ENCODE measurements at regions of chr1 and their contacts with region 1.

Region 1: DNA sequence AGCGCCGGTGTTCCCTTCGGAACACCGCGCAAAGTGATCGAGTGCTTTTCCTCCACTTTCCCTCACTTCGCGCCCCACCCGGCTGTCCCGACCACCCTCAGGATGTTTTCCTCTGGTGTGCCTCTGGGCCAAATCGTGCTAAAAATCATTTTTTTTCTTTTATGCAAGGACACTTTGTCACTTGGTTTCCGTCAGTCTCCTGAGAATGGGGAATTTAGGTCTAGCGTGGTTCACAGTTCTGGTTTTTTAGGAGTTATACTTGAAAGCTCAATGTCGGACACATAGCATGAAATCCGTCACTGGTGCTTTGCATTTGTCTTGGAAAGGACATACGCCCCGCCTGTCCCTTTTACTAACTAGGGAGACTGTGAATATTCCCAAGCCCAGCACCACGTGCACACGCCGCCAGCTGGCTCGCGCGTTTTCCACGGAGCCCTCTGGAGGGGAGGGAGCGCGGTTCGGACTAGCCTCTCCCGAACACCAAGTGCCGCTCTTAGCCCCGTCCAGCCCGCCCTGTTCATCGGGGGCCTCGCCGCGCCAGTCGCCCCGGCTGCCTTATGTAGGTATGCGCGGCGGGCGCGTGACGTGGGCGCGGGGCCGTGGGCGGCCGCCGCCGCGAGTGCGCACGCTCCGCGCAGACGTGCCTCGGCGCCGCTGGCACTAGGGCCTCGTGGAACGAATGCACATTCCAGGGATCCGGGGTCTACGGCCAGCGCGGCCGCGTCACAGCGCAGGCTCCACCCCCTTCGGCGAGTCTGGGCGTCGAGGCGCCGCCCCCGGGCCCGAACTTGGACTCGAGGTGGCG is 572 bp upstream of the IRF2BP2 start:
- DNase-seq: peak; percentile 97

Region 2: DNA sequence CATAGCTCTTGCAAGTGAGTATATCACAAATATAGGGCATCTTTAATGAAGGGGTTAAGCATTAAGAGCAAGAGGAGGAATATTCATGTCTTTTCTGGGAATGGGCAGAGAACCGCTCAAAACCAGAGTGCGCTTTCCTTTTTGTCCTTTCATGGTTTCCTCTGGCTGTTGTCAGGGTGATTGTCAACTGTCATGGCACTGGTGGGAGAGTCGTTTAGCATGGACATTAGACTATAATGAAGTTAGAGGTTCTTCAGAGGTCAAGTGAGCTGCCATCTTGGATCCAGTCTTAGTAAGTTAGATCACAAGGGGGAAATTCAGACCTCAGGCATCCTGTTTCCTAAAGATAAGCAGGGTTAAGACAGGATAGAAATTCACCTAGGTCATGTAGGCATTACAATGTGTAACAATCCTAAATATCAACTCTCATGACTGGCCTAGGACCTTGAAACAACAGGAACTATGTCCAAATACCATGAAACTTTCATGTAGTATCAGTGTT is 249.4 kb before region 1 on chr1:
- intact Hi-C with region 1: no loop called
- DNase-seq: no peak

Region 3: DNA sequence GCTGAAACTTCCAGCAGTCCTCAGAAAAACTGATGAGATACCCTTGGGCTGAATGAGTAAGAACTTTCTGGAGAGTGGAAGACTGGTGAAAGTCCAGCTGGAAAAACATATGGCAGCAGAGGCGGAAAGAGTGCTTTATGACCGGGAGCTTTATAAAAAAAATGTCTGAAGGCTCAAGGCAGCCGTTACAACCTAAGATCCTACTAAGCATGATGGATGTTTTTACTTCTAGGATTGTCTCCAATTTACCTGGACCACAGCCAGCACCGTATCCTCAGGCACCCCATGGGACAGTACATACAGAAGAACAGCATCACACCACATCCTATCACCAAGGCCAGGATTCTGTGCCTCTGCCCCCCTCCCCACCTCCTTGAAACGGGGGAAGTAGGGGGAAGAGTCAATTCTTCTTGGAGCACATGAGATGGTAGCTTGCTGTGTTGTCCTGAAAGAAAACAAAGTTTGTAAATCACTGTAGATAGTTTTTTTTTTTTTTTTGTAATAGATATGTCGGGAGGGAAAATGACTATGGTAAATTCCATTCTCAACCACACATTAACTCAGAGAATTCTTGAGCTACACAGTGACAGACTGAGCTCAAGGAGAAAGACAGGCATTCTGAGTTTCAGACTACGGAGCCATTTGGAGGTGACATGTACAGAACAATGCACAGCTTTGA is 11.2 kb after region 1 on chr1:
- intact Hi-C with region 1: no loop called
- DNase-seq: no peak

Region 4: DNA sequence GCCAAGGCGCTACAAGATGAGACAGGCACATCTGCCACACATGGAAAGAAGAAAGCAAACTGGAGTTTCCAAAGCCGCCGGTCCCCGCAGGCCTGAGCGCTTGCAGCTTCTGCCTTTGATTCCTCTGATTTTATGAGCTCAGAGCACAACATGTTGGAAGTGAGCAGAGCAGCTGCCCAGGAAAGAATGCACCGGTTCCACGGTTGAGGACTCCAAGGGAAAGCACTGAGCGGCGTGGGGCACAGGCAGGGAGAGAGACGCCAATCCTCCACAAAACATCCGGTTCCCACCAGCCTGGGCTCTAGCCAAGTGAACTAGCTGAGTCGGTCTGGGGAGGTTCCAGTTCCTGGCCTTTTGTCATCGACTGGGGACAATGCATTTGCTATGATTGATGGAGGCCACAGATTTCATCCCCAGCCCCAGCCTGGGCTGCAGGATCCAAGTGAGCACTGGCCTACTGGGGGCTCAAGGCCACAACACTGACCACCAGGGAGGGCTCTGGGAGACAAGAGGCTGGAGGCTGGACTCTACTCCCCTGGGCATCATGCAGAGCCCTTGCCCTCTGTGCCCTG is 252.5 kb after region 1 on chr1:
- intact Hi-C with region 1: loop called (anchors 5 kb)
- DNase-seq: peak; percentile 87

Region 5: DNA sequence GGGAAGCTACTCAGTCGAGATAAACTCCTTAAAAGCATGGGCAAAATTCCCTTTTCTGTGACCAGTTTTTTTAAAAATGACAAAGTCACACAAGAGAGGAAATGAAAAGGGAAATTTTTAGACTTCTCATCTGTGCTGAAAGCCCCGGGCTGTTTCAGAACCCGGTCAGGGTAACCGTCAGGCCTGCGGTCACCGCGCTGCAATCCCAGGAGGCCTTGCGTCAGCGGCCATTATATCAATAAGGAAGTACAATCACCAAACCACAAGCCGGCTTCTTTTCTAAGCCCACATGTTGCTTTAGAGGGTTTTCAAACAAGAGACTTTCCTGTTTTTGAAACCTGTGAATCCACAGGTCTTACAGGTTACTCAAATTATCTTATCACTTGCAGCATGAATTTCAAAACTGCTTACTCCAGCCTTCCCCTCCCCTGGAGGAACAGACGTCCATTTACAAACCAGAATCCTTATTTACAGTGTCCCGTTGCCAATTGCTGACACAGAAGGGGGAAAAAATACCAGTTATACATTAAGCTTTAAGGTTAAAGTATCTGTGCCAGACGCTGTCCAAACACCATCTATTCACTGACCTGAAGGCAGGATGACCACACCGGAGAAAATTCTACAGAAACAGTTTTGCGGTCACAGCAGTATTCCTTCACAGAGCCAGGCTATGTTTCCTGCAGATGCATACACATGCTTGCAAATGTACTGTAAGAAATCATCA is 352.8 kb after region 1 on chr1:
- intact Hi-C with region 1: loop called (anchors 5 kb)
- DNase-seq: peak; percentile 94

Region 6: GRCh38 chr1:234997201-234997895 is 386.8 kb after region 1 on chr1:
- intact Hi-C with region 1: loop called (anchors 5 kb)
- DNase-seq: peak; percentile 97

Measured in cardiac septum (tissue), 1 donor.